ENCODE measurements at regions of chr6 and their contacts with region 1.

Region 1: GRCh38 chr6:106512048-106512967 is 117.0 kb downstream of the RTN4IP1 start:
- DNase-seq: peak; percentile 96
- H3K4me3 Mint-ChIP-seq: peak overlapping the region; percentile 82
- H3K27ac Mint-ChIP-seq: peak overlapping the region; percentile 96
- H3K4me1 Mint-ChIP-seq: peaks cover 50% of the 10 kb centered on the region
- H3K27me3 Mint-ChIP-seq: peaks cover 22% of the 10 kb centered on the region

Region 2: GRCh38 chr6:106444777-106445507 is 67.4 kb before region 1 on chr6:
- intact Hi-C with region 1: loop called (anchors 2 kb)
- DNase-seq: peak; percentile 84
- H3K4me3 Mint-ChIP-seq: no peak overlapping the region
- H3K27ac Mint-ChIP-seq: no peak overlapping the region
- H3K4me1 Mint-ChIP-seq: peaks cover 11% of the 10 kb centered on the region
- H3K27me3 Mint-ChIP-seq: peaks cover 34% of the 10 kb centered on the region

Region 3: DNA sequence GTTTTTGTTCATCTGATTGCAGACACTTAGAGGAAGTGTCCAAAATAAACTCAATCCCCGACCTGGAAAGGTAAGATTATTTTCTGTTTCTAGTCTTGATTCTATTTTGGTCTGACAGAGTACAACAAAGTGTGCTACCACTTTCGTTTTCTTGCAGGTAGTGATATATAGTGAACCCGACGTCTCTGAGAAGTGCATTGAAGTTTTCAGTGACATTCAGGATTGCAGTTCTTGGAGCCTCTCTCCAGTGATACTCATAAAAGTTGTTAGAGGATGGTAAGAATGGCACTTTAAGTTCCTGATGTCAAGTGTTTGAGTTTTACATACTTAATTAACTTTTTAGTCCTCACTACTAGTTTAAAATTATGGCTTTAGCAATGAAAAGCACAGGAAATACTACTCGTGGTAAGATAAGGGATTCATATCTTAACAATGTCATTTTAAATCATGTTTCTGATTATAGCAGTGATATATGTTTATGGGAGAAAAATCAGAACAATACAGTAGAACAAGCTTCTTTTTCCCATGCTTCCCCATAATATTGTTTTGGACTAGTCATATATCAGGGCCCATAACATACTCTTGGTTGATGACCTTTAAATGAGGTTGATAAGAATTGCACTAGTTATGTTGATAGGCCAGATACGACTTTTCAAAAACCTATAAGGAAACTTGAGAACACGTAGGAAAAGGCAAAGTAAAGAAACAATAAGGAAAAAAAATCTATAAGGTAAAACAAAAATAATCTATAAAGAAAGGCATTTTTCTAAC is 13.0 kb after region 1 on chr6:
- intact Hi-C with region 1: loop called (anchors 1 kb)
- DNase-seq: peak; percentile 80
- H3K4me3 Mint-ChIP-seq: peak overlapping the region; percentile 86
- H3K27ac Mint-ChIP-seq: peak overlapping the region; percentile 92
- H3K4me1 Mint-ChIP-seq: peaks cover 48% of the 10 kb centered on the region
- H3K27me3 Mint-ChIP-seq: no peaks in the 10 kb centered on the region

Region 4: DNA sequence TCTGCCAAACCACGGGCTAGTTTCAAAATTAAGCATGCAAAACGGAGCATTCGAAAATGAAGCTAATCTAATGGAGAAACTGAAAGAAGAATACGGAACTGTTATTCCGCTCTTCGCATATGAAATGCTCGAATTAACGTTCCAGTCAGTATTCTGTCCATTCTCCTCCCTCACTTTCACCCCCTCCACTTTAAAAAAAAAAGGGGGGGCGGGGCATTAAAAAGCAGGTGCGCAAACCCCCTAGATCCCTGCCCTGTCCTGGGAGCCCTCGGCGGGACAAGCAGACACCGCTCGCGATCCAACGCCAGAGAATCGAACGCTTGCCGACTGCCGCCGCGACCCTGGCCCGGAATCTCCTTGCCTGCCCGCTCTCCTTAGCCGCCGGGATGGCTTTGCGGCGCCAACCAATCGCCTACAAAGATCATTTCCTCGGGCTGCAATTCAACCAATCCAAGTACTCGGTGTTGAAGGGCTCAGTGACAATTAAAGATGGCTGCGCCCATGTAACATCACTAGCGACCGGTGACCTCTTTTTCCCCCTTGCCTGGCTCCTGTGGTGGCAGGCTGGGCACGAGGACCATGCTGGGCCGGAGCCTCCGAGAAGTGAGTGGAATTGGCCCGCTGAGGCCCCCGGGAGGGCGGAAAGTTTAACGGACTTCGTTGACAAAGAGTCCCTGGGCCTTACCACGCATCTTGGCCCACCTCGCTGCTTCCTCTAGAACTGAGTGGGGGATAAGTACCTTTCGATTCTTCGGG is 117.0 kb after region 1 on chr6 and contains the starts of genes QRSL1 and RTN4IP1:
- intact Hi-C with region 1: loop called (anchors 5 kb)
- DNase-seq: peak; percentile 95
- H3K4me3 Mint-ChIP-seq: peak within 1 kb of the TSS; percentile 92
- H3K27ac Mint-ChIP-seq: peak within 1 kb of the TSS; percentile 97
- H3K4me1 Mint-ChIP-seq: peaks cover 18% of the 10 kb centered on the region
- H3K27me3 Mint-ChIP-seq: no peaks in the 10 kb centered on the region
- total RNA-seq, gene QRSL1: 22.4 and 24.2 TPM in 2 replicates
- total RNA-seq, gene RTN4IP1: 7.2 and 8.0 TPM in 2 replicates

Measured in activated CD4-positive, alpha-beta T cell treated with anti-CD3 and anti-CD28 coated beads, Interleukin-2, amount 10 ng/mL, durations not matched to agents 24 days and 14 days (primary cell).